Dendritic cell treated with granulocyte-macrophage colony-stimulating factor and Interleukin-4, amounts not matched to agents 40 ng/mL and 50 ng/mL, for 4 days (primary cell): ENCODE measurements at regions of chr11 and their contacts with region 1.

Region 1: DNA sequence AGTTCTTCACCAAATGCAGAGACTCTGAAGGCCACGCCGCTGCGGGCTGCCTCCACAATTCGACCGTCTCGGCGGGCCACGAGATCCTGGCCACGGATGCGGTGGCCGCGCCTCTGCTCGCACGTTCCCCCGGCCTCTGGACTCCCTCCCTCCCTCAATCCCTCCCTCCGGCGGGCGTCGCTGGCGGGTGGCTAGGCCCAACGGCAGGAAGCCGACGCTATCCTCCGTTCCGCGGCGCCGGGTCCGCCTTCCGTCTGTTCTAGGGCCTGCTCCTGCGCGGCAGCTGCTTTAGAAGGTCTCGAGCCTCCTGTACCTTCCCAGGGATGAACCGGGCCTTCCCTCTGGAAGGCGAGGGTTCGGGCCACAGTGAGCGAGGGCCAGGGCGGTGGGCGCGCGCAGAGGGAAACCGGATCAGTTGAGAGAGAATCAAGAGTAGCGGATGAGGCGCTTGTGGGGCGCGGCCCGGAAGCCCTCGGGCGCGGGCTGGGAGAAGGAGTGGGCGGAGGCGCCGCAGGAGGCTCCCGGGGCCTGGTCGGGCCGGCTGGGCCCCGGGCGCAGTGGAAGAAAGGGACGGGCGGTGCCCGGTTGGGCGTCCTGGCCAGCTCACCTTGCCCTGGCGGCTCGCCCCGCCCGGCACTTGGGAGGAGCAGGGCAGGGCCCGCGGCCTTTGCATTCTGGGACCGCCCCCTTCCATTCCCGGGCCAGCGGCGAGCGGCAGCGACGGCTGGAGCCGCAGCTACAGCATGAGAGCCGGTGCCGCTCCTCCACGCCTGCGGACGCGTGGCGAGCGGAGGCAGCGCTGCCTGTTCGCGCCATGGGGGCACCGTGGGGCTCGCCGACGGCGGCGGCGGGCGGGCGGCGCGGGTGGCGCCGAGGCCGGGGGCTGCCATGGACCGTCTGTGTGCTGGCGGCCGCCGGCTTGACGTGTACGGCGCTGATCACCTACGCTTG is at the start of gene FUT4:
- H3K4me3 Mint-ChIP-seq: peak within 1 kb of the TSS; percentile 93
- H3K27ac Mint-ChIP-seq: peak within 1 kb of the TSS; percentile 98
- H3K4me1 Mint-ChIP-seq: peaks cover 45% of the 10 kb centered on the region
- H3K27me3 Mint-ChIP-seq: no peaks in the 10 kb centered on the region

Region 2: GRCh38 chr11:93529707-93530467 is 1014.1 kb before region 1 on chr11:
- intact Hi-C with region 1: loop called (anchors 5 kb)
- H3K4me3 Mint-ChIP-seq: peak overlapping the region; percentile 13
- H3K27ac Mint-ChIP-seq: peak overlapping the region; percentile 91
- H3K4me1 Mint-ChIP-seq: peaks cover 78% of the 10 kb centered on the region
- H3K27me3 Mint-ChIP-seq: no peaks in the 10 kb centered on the region

Region 3: DNA sequence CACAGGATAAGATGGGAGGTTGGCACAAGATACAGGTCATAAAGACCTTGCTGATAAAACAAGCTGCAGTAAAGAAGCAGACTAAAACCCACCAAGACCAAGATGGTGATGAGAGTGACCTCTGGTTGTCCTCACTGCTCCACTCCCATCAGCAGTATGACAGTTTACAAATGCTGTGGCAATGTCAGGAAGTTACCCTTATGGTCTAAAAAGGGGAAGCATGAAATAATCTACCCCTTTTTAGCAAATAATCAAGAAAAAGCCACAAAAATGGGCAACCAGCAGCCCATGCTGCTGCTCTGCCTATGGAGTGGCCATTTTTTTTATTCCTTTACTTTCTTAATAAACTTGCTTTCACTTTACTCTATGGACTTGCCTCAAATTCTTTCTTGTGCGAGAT is 14.5 kb after region 1 on chr11:
- intact Hi-C with region 1: no loop called
- H3K4me3 Mint-ChIP-seq: no peak overlapping the region
- H3K27ac Mint-ChIP-seq: peak overlapping the region; percentile 70
- H3K4me1 Mint-ChIP-seq: peaks cover 51% of the 10 kb centered on the region
- H3K27me3 Mint-ChIP-seq: no peaks in the 10 kb centered on the region

Region 4: GRCh38 chr11:94583866-94584500 is 40.0 kb after region 1 on chr11:
- intact Hi-C with region 1: loop called (anchors 5 kb)
- H3K4me3 Mint-ChIP-seq: peak overlapping the region; percentile 25
- H3K27ac Mint-ChIP-seq: peak overlapping the region; percentile 89
- H3K4me1 Mint-ChIP-seq: peaks cover 45% of the 10 kb centered on the region
- H3K27me3 Mint-ChIP-seq: no peaks in the 10 kb centered on the region